HepG2 (cell line): ENCODE measurements at regions of chr18 and their contacts with region 1.

Region 1: GRCh38 chr18:63422087-63422809 is at the start of gene VPS4B:
- DNase-seq: peak; percentile 98
- ATAC-seq: peak; percentile 98
- H3K4me3 ChIP-seq: peak within 1 kb of the TSS; percentile 77 to 96 (median 90)
- H3K27ac ChIP-seq: peak within 1 kb of the TSS; percentile 88
- H3K4me1 ChIP-seq: peaks cover 29% of the 10 kb centered on the region
- H3K27me3 ChIP-seq: no peaks in the 10 kb centered on the region; a peak in 1 of 5 replicates
- CTCF ChIP-seq: no peak
- EP300 ChIP-seq: no peak
- POLR2A ChIP-seq: peak; percentile 87 to 89
- RAD21 ChIP-seq: no peak
- total RNA-seq, gene VPS4B: 25.9 and 38.3 TPM in 2 replicates

Region 2: DNA sequence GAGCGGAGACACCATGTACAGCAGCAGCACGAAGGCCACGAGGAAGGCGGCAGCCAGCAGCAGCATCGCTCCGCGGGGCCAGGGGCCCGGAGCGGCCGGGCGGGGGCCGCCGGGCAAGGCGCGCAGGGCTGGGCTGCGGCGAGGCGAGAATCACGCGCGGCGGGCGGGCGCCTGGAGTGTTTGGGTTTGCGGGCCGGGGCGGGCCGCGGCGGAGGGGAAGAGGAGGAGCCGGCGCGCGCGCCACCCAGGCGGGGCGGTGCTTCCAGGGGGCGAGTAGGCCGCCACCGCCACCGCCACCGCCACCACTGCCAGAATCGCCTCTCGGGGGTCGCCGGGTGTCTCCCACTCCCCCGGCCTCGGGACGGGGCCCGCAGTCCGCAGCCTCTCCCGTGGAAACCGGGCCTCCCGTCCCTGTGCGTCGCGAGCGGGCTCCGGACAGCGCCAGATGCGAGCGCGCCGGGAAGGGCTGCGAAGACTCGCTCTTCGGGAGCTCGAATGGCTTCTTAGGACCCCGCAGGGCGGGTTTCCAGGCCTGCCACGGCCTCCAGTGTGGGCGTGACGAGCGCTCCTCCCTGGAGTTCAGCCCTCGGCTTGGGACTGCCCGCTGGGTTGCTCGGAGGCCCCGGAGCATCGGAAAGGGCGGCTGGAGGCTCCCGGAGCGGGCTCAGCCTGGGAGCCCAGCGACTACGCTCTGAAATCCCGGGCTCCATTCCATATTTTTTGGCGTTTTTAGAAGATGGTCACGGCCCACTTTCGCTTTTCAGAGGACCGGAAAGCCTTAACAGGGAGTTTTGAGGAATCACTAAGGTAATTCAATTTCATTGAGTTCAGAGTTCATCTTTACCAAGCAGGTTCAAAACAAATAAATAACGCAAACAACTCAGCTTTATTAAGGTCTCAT is 54.9 kb before region 1 on chr18 and contains the start of gene KDSR:
- CTCF ChIA-PET with region 1: no interaction called
- POLR2A ChIA-PET with region 1: interaction called, 36 read pairs
- in situ Hi-C with region 1: no loop called
- intact Hi-C with region 1: loop called (anchors 1 kb)
- DNase-seq: peak; percentile 94
- ATAC-seq: peak; percentile 96
- H3K4me3 ChIP-seq: peak within 1 kb of the TSS; percentile 80 to 96 (median 82)
- H3K27ac ChIP-seq: peak within 1 kb of the TSS; percentile 96
- H3K4me1 ChIP-seq: peaks cover 38% of the 10 kb centered on the region
- H3K27me3 ChIP-seq: no peaks in the 10 kb centered on the region; a peak in 1 of 5 replicates
- CTCF ChIP-seq: no peak
- EP300 ChIP-seq: peak in 1 of 2 experiments; percentile 14; a peak in 2 of 4 replicates
- POLR2A ChIP-seq: peak; percentile 92 to 97
- RAD21 ChIP-seq: peak; percentile 50; the same call in 1 of the 2 replicates
- total RNA-seq, gene KDSR: 8.2 and 10.4 TPM in 2 replicates

Region 3: DNA sequence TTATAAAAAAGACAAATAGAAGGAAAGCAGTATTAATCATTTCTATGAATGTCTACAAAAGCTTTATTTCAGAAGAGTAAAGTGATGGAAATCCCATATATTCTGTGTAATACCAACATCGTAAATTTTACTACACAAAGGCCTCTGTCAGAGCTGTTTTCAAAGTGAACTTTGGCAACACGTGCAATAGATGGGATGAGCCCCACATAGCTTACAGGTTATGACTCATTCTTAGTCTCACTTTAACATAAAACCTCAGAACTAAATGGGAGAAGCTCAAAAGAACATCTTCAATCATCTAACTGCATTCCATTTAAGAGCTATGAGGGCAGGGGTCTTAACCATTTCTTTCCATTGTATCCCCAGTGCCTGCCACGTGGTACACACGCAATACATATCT is 11.5 kb before region 1 on chr18:
- CTCF ChIA-PET with region 1: no interaction called
- POLR2A ChIA-PET with region 1: interaction called, 34 read pairs
- in situ Hi-C with region 1: no loop called
- intact Hi-C with region 1: no loop called
- DNase-seq: peak; percentile 67
- ATAC-seq: peak; percentile 81
- H3K4me3 ChIP-seq: no peak overlapping the region; a peak in 2 of 6 replicates
- H3K27ac ChIP-seq: no peak overlapping the region
- H3K4me1 ChIP-seq: peaks cover 28% of the 10 kb centered on the region
- H3K27me3 ChIP-seq: no peaks in the 10 kb centered on the region
- CTCF ChIP-seq: no peak
- EP300 ChIP-seq: no peak
- POLR2A ChIP-seq: no peak
- RAD21 ChIP-seq: no peak